Activated CD8-positive, alpha-beta T cell treated with anti-CD3 and anti-CD28 coated beads, Interleukin-2, amount 10 ng/mL, durations not matched to agents 7 days and 5 days (primary cell): ENCODE measurements at regions of chr9 and their contacts with region 1.

Region 1: DNA sequence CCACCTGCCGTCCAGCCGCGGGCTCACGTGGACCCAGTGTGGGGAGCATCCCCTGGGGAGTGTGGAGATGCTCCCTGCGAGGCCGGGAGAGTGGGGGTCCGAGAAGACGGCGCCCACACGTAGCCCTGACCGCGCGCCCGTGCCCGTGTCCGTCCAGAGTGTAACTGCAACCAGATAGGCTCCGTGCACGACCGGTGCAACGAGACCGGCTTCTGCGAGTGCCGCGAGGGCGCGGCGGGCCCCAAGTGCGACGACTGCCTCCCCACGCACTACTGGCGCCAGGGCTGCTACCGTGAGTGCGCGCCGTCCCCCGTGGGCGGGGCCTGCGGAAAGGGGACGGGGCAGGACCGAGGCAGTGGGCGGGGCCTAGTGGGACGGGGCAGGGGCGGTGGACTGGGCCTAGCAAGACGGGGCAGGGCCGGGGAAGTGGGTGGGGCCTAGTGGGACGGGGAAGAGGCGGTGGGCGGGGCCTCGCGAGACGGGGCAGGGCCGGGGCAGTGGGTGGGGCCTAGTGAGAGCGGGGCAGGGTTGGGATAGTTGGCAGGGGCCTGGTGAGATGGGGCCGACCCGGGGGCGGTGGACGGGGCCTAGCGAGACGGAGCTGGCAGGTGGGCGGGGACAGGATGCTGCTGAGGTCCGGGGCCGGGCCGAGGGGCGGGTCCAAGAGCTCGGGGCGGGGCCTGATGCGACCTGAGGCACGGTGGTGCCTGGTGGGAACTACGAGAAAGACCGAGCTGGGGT is 79.1 kb downstream of the NTNG2 start:
- DNase-seq: peak; percentile 100
- ATAC-seq: peak; percentile 95
- H3K4me3 Mint-ChIP-seq: peak overlapping the region; percentile 96
- H3K27ac Mint-ChIP-seq: peak overlapping the region; percentile 98
- H3K4me1 Mint-ChIP-seq: peaks cover 20% of the 10 kb centered on the region
- H3K27me3 Mint-ChIP-seq: peaks cover 18% of the 10 kb centered on the region

Region 2: DNA sequence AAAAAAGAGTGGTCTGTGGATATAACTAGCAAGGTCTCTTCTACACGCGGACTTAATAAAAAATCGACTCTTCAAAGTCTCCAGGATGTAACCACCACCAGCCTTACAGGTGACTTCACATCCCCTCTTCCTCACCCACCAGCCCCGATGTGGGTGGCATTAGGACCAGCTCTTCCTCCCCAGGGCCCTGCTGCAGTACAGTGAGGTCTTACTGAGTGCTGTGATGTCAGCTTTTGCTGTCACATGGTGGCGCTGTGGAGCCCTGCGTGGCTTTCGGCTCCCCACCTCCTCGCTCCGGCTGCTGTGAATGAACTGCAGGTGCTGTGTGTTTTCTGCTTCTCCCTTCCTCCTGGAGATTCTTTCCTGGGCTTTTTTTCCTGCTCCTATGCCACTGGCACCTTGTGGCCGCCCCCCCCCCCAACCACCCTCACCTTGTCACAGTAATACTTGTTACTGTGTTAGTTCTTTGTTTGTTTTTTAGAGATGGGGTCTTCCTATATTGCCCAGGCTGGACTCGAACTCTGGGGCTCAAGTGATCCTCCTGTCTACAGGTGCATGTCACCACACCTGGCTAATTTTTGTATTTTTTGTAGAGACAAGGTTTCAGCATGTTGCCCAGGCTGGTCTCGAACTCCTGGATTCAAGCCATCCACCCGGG is 485.3 kb before region 1 on chr9:
- CTCF ChIA-PET with region 1: interaction called, 44 read pairs
- POLR2A ChIA-PET with region 1: no interaction called
- DNase-seq: peak; percentile 92
- ATAC-seq: peak; percentile 99
- H3K4me3 Mint-ChIP-seq: no peak overlapping the region
- H3K27ac Mint-ChIP-seq: no peak overlapping the region
- H3K4me1 Mint-ChIP-seq: peaks cover 5% of the 10 kb centered on the region
- H3K27me3 Mint-ChIP-seq: peaks cover 16% of the 10 kb centered on the region

Region 3: GRCh38 chr9:131762356-131762932 is 478.5 kb before region 1 on chr9:
- CTCF ChIA-PET with region 1: interaction called, 44 read pairs
- POLR2A ChIA-PET with region 1: no interaction called
- DNase-seq: peak; percentile 75
- ATAC-seq: peak; percentile 92
- H3K4me3 Mint-ChIP-seq: no peak overlapping the region
- H3K27ac Mint-ChIP-seq: no peak overlapping the region
- H3K4me1 Mint-ChIP-seq: no peaks in the 10 kb centered on the region
- H3K27me3 Mint-ChIP-seq: peaks cover 22% of the 10 kb centered on the region

Region 4: GRCh38 chr9:132169672-132170392 is 71.1 kb before region 1 on chr9:
- CTCF ChIA-PET with region 1: interaction called, 146 read pairs
- POLR2A ChIA-PET with region 1: no interaction called
- DNase-seq: peak; percentile 73
- ATAC-seq: peak; percentile 72
- H3K4me3 Mint-ChIP-seq: no peak overlapping the region
- H3K27ac Mint-ChIP-seq: no peak overlapping the region
- H3K4me1 Mint-ChIP-seq: no peaks in the 10 kb centered on the region
- H3K27me3 Mint-ChIP-seq: peaks cover 26% of the 10 kb centered on the region

Region 5: DNA sequence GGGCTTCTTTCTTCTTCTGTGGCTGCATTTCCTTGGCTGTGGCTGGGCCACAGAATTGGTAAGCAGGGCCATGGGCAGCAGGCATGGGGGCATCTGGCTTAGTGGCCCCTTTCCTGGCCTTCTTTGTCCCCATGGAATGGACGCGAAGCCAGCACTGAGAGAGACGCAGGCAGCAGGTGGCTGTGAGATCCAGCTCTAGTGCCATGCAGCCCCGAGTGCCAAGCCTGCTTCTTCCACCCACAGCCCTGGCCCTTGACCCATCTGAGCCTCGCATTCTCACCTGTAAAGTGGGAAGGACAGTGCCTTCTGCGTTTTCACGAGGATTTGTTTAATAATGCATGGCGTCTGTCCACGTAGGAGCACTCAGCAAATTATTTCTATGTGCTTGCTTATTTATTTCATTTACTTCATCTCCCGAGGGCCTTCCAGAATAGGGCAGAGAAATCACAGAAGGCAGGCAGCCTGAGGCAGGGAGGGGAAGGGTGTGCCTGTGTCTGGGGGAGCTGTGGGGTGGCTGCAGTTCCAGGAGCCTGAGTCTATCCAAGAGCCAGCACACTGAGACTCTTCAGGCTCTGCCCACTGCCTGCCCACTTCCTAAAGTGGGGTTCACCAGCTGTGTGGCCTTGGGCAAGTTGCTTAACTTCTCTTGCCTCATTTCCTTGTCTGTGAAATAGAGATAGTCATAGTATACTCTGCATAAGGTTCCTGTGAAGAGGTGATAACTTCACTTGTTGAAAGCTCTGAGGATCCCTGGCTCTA is 23.9 kb before region 1 on chr9:
- CTCF ChIA-PET with region 1: interaction called, 12 read pairs
- POLR2A ChIA-PET with region 1: no interaction called
- DNase-seq: no peak
- ATAC-seq: no peak
- H3K4me3 Mint-ChIP-seq: no peak overlapping the region
- H3K27ac Mint-ChIP-seq: no peak overlapping the region
- H3K4me1 Mint-ChIP-seq: peaks cover 9% of the 10 kb centered on the region
- H3K27me3 Mint-ChIP-seq: peaks cover 7% of the 10 kb centered on the region

Region 6: GRCh38 chr9:132260846-132261245 is 19.9 kb after region 1 on chr9:
- CTCF ChIA-PET with region 1: interaction called, 19 read pairs
- POLR2A ChIA-PET with region 1: no interaction called
- DNase-seq: no peak
- ATAC-seq: no peak
- H3K4me3 Mint-ChIP-seq: no peak overlapping the region
- H3K27ac Mint-ChIP-seq: no peak overlapping the region
- H3K4me1 Mint-ChIP-seq: peaks cover 11% of the 10 kb centered on the region
- H3K27me3 Mint-ChIP-seq: no peaks in the 10 kb centered on the region